Head of caudate nucleus (tissue), 42 donors: ENCODE measurements at regions of chr3 and their contacts with region 1.

Region 1: DNA sequence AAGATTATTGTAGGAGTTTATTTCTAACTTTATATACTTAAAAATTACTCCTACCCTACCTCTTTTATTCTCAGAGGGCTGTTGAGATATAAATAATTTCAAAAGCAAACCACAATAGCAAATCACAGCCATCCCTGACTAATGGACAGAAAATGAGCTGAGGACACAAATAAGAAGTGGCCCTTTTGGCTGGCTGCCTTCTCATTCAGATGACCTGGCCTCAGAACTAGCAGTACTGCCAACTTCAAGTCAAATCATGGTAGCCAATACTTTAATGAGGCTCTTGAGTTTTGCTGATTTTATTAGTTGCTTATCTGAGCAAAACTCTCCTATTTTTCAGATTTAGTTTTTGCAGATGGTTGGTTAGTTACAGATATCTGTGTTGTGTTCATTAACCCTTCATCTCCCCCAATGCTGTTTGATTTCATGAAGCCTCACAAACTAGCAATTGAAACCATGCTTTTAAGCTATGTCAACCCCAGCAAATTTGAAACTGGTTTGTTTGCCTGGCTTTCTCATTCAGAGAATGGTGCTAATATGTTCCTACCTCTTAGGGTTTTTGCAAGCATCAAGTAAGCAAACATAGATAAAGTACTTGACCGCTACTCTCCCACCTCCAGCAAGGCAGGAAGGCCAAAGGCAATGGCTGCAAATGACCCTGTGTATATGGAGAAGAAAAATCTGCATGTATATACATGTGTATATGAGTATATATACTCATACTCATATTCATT is 73.4 kb upstream of the HACD2 start:
- DNase-seq: peak in 21 of 42 donors; percentile 10 to 75 (median 45)

Region 2: DNA sequence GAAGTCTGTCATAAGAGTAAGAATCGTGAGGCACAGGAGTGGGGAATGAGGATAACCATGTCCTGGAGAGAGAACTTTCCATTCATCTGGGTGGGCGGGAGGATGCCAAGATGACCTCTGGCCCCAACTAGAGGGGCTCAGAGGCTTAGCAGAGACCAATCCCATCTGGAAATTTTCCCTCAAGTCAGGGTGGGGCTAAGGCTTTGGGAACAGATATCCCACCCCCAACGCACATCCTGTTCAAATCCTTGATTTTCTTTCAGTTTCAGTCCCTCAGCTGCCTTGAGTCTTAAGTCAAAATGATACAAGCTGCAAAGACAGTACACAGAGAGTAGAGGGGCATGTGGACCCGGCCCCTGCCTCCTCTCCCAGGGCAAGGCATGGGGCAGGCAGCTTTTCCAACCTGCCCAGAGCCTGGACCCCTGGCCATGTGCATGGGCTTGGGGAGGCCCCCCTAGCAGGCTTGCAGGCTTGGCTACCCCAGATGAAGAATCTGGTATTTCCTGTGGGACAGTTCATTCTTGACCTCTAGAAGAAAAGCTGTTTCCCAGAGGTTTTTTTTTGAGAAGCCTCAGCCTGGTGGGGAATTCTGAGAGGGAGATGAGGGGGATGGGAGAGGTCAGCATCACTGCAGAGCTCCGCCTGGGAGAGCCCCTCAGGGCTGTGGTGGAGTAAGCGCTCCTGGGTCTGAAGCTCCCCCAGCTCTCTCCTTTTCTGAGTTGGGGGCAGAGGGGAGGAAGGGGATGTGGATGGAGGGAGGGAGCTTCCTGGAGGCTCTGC is 36.3 kb after region 1 on chr3:
- intact Hi-C with region 1: loop called (anchors 5 kb)
- DNase-seq: no peak